Panc1 (cell line): ENCODE measurements at regions of chr18 and their contacts with region 1.

Region 1: GRCh38 chr18:26090130-26091046 is at the start of gene SS18:
- DNase-seq: peak; percentile 41
- ATAC-seq: peak; percentile 96
- H3K4me3 ChIP-seq: peak within 1 kb of the TSS; percentile 78 to 90
- H3K27ac ChIP-seq: peak within 1 kb of the TSS; percentile 98
- H3K4me1 ChIP-seq: peaks cover 11% of the 10 kb centered on the region; the same call in 1 of the 2 replicates
- H3K27me3 ChIP-seq: no peaks in the 10 kb centered on the region
- CTCF ChIP-seq: no peak
- total RNA-seq, gene SS18: 99.1 TPM

Region 2: GRCh38 chr18:25946540-25946939 is 143.8 kb before region 1 on chr18:
- CTCF ChIA-PET with region 1: no interaction called
- POLR2A ChIA-PET with region 1: no interaction called
- in situ Hi-C with region 1: no loop called
- intact Hi-C with region 1: no loop called
- DNase-seq: no peak
- ATAC-seq: no peak
- H3K4me3 ChIP-seq: no peak overlapping the region
- H3K27ac ChIP-seq: no peak overlapping the region
- H3K4me1 ChIP-seq: no peaks in the 10 kb centered on the region
- H3K27me3 ChIP-seq: no peaks in the 10 kb centered on the region; the same call in 1 of the 2 replicates
- CTCF ChIP-seq: no peak

Region 3: GRCh38 chr18:26127786-26128185 is 37.4 kb after region 1 on chr18:
- CTCF ChIA-PET with region 1: no interaction called
- POLR2A ChIA-PET with region 1: no interaction called
- in situ Hi-C with region 1: no loop called
- intact Hi-C with region 1: loop called (anchors 1 kb)
- DNase-seq: no peak
- ATAC-seq: no peak
- H3K4me3 ChIP-seq: no peak overlapping the region
- H3K27ac ChIP-seq: no peak overlapping the region
- H3K4me1 ChIP-seq: no peaks in the 10 kb centered on the region
- H3K27me3 ChIP-seq: peaks cover 2% of the 10 kb centered on the region; the same call in 1 of the 2 replicates
- CTCF ChIP-seq: no peak

Region 4: DNA sequence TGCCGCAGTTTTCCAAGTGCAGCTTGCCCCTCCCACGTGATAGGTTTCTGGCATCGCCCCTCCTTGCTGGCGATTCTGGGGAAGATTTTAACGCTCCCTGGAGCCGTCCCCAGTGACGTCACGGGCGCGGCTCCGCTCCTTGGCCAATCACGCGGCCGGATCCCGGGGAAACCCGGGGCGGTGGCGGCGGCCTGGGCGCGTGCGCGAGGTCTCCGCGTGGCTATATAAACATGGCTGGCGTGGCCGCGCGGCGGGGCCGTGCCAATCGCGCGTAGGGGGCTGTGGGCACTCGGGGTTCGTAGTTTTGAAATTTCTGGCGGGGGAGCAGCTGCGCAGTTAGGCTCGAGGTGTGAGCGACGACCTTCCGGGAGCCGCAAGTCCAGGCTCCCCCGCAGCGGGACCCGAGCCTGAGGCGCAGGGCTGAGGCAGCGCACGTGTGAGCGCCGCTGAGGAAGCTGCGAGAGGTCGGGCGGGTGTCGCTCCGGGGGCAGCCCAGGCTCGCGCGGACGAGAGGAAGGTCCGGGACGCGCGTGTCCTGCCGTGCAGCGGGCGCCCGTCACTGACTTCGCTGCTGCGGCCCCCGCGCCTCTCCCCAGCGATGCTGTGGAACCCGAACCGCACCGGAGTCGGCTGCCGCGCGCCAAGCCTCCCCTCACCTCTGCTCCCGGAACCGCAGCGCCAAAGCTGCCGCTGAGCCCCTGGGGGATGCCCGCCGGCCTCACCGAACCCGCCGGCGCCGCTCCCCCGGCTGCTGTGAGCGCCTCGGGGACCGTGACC is 136.0 kb after region 1 on chr18 and contains the start of gene TAF4B:
- CTCF ChIA-PET with region 1: no interaction called
- POLR2A ChIA-PET with region 1: no interaction called
- in situ Hi-C with region 1: no loop called
- intact Hi-C with region 1: loop called (anchors 5 kb)
- DNase-seq: peak; percentile 62
- ATAC-seq: peak; percentile 95
- H3K4me3 ChIP-seq: peak within 1 kb of the TSS; percentile 76 to 83
- H3K27ac ChIP-seq: peak within 1 kb of the TSS; percentile 80
- H3K4me1 ChIP-seq: peaks cover 11% of the 10 kb centered on the region
- H3K27me3 ChIP-seq: no peaks in the 10 kb centered on the region
- CTCF ChIP-seq: no peak
- total RNA-seq, gene TAF4B: 8.0 TPM

Region 5: GRCh38 chr18:26548429-26549262 is 458.3 kb after region 1 on chr18 and contains the start of gene KCTD1:
- CTCF ChIA-PET with region 1: no interaction called
- POLR2A ChIA-PET with region 1: interaction called, 11 read pairs
- in situ Hi-C with region 1: no loop called
- intact Hi-C with region 1: no loop called
- DNase-seq: peak; percentile 30
- ATAC-seq: peak; percentile 67
- H3K4me3 ChIP-seq: peak within 1 kb of the TSS; percentile 71 to 77
- H3K27ac ChIP-seq: peak within 1 kb of the TSS; percentile 85
- H3K4me1 ChIP-seq: peaks cover 18% of the 10 kb centered on the region
- H3K27me3 ChIP-seq: no peaks in the 10 kb centered on the region
- CTCF ChIP-seq: no peak
- total RNA-seq, gene KCTD1: 34.4 TPM